Activated CD8-positive, alpha-beta T cell treated with anti-CD3 and anti-CD28 coated beads for 36 hours (primary cell): ENCODE measurements at regions of chr17 and their contacts with region 1.

Region 1: DNA sequence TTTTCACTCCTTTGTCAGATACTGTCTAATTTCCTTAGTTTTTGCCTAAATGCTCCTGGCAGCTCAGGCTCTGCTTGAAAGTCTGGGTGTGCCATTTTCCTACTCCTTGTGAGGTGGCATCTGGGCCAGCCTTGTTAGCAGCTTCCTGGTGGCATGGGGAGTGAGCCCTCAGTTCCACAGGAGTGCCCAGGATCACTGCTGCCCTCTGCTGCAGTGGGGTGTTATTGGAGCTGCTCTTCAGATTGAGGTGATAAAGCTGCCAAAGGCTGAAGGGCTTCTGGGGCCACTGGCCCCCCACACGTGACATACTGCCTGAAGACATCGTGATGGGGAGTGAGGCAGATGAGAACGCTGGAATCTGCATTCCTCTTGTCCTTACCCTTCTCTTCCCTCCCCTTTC is 27.4 kb downstream of the CEP95 start:
- DNase-seq: no peak
- ATAC-seq: peak; percentile 45
- H3K4me3 Mint-ChIP-seq: no peak overlapping the region
- H3K27ac Mint-ChIP-seq: peak overlapping the region; percentile 82
- H3K4me1 Mint-ChIP-seq: peaks cover 12% of the 10 kb centered on the region
- H3K27me3 Mint-ChIP-seq: no peaks in the 10 kb centered on the region
- CTCF ChIP-seq: peak; percentile 20

Region 2: GRCh38 chr17:64544742-64545141 is 10.6 kb after region 1 on chr17:
- CTCF ChIA-PET with region 1: interaction called, 11 read pairs
- POLR2A ChIA-PET with region 1: interaction called, 3 read pairs
- intact Hi-C with region 1: no loop called
- DNase-seq: no peak
- ATAC-seq: no peak
- H3K4me3 Mint-ChIP-seq: no peak overlapping the region
- H3K27ac Mint-ChIP-seq: no peak overlapping the region
- H3K4me1 Mint-ChIP-seq: no peaks in the 10 kb centered on the region
- H3K27me3 Mint-ChIP-seq: no peaks in the 10 kb centered on the region
- CTCF ChIP-seq: no peak

Region 3: DNA sequence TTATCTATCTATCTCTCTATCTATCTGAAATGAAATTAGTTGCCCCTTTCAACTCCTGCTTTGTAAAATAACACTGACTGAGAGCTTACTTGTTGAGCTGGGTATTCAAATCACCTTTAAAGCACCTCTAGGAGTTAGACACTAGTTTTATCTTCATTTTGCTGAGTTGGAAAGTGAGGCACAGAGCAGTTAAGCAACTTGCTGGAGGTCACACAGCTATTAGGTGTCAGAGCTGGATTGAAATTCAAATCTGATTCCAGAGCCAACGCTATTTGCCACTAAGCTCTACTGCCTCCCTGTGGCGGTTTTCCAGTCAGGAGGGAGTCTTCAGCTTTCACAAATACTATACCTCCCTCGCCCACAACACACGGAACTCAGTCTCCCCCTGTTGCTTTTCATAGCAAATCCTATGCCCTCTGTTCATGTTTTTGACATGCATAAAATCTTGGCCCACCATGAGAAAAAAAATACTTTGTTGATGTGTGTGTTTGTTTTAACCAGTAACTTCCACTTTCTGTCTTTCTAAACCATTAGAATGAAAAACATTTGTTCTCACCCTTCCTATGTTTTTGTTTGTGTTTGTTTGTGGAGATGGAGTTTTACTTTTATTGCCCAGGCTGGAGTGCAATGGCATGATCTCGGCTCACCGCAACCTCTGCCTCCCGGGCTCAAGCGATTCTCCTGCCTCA is 202.8 kb after region 1 on chr17:
- CTCF ChIA-PET with region 1: no interaction called
- POLR2A ChIA-PET with region 1: no interaction called
- intact Hi-C with region 1: no loop called
- DNase-seq: peak; percentile 78
- ATAC-seq: peak; percentile 83
- H3K4me3 Mint-ChIP-seq: no peak overlapping the region
- H3K27ac Mint-ChIP-seq: no peak overlapping the region
- H3K4me1 Mint-ChIP-seq: peaks cover 23% of the 10 kb centered on the region
- H3K27me3 Mint-ChIP-seq: no peaks in the 10 kb centered on the region
- CTCF ChIP-seq: peak; percentile 80